ENCODE measurements at regions of chr14 and their contacts with region 1.

Region 1: GRCh38 chr14:105203057-105203531 is 22.0 kb upstream of the NUDT14 start:
- DNase-seq: peak; percentile 75
- H3K4me3 ChIP-seq: no peak overlapping the region
- H3K27ac ChIP-seq: no peak overlapping the region
- H3K4me1 ChIP-seq: peaks cover 4% of the 10 kb centered on the region
- H3K27me3 ChIP-seq: no peaks in the 10 kb centered on the region
- CTCF ChIP-seq: peak; percentile 97

Region 2: GRCh38 chr14:105281371-105282097 is 78.4 kb after region 1 on chr14:
- CTCF ChIA-PET with region 1: no interaction called
- POLR2A ChIA-PET with region 1: no interaction called
- intact Hi-C with region 1: loop called (anchors 2 kb)
- DNase-seq: peak; percentile 73
- H3K4me3 ChIP-seq: no peak overlapping the region
- H3K27ac ChIP-seq: no peak overlapping the region
- H3K4me1 ChIP-seq: no peaks in the 10 kb centered on the region
- H3K27me3 ChIP-seq: no peaks in the 10 kb centered on the region
- CTCF ChIP-seq: peak; percentile 83

Region 3: DNA sequence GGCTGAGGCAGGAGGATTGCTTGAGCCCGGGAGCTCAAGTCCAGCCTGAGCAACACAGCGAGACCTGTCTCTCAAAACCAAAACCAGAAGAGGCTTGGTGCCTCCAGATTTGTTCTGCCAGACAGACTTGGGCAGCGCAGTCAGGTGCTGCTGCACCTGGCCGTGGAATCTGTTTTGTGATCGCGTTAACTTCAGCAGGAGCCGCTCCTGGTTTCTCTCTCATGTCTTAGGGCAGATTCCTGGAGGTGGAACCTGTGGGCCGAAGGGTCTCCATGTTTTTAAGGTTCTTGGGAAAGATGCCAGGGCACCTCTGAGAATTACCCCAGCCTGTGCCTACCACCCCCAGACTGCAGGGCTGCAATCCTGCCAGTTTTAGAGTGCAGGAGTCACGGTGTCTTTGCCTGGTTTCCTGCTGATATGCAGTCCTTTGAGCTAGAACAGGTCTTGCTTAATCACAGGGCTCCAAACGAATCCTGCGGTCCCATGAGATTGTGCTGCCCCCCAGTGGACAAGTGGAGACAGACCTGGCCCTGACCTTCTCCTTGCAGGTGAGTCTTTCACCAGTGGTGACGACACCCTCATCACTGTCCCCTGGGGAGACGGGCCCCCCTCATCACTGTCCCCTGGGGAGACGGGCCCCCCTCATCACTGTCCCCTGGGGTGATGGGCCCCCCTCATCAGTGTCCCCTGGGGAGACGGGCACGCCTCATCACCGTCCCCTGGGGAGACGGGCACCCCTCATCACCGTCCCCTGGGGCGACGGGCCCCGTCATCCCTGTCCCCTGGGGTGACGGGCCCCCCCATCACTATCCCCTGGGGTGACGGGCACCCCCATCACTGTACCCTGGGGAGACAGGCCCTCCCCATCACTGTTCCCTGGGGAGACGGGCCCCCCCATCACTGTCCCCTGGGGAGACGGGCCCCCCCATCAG is 149.1 kb after region 1 on chr14:
- CTCF ChIA-PET with region 1: no interaction called
- POLR2A ChIA-PET with region 1: no interaction called
- intact Hi-C with region 1: loop called (anchors 1 kb)
- DNase-seq: peak; percentile 93
- H3K4me3 ChIP-seq: no peak overlapping the region
- H3K27ac ChIP-seq: peak overlapping the region; percentile 24
- H3K4me1 ChIP-seq: peaks cover 8% of the 10 kb centered on the region
- H3K27me3 ChIP-seq: no peaks in the 10 kb centered on the region
- CTCF ChIP-seq: peak; percentile 93

Region 4: DNA sequence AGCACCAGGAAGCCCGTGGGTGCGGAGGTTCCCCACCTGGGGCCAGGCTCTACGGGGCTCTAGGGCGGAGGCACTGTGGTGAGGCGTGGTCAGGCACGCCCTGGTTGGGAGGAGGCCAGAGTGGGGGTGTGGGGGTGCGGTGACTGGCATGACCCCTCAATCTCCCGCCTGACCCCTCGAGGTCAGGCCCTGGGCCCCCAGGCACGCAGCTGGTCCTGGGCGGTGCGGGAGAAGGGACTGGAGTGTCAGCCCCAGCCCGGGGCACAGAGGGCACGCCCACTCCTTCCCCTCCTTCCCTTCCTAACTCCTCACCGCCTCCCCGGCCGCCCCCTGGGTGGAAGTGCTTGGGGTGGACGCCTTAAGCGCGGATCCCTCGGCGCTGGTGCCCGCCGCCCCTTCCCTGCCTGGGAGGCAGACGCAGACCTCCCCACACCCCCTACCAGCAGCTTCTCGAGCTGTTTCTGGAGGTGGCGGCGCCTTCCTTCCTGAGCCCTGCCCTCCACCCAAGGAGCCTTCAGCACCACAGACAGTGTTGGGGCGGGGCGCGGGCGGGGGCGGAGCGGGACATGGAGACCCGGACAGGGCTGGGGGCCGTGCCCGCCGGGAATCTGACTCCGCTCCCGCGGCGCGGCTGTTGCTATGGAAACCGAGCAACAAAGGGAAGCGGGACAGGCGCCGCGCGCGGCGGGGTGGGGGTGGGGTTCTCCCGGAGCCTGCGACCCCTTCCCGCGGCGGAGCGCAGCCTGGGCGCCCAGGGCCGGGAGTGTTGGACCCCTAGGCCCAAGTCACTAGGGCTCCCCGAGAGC is 270.8 kb after region 1 on chr14:
- CTCF ChIA-PET with region 1: no interaction called
- POLR2A ChIA-PET with region 1: no interaction called
- intact Hi-C with region 1: no loop called
- DNase-seq: peak; percentile 98
- H3K4me3 ChIP-seq: peak overlapping the region; percentile 99
- H3K27ac ChIP-seq: peak overlapping the region; percentile 80
- H3K4me1 ChIP-seq: peaks cover 60% of the 10 kb centered on the region
- H3K27me3 ChIP-seq: no peaks in the 10 kb centered on the region
- CTCF ChIP-seq: no peak

Measured in A673 (cell line).